ENCODE measurements at regions of chr16 and their contacts with region 1.

Region 1: GRCh38 chr16:1408171-1408837 is 6.2 kb downstream of the UNKL start:
- DNase-seq: peak; percentile 93
- ATAC-seq: peak; percentile 84
- H3K4me3 Mint-ChIP-seq: peak overlapping the region; percentile 72
- H3K27ac Mint-ChIP-seq: no peak overlapping the region
- H3K4me1 Mint-ChIP-seq: no peaks in the 10 kb centered on the region
- H3K27me3 Mint-ChIP-seq: no peaks in the 10 kb centered on the region
- CTCF ChIP-seq: no peak

Region 2: DNA sequence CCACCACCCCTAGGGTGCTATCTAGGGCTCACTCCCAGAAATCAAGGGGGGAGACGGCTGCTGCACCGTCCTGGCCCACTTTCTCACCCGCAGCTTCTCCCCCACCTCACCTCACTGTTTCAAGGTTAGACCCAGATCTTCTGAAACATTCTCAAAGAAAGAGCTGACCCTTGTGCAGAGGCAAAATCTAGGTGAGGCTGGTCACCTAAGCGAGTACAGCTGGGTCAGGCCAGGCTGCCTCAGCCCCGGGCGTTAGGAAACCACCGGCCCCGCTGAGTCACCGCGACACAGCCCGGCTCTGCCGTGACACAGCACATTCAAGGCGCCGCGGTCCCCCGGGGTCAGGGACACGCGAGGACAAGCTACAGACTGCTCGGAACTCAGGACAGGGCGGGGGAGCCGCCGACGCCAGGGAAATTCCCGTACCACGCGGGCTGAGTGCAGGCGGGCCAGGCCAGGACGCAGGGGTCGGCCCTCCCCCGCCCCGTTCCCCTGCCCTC is 29.4 kb before region 1 on chr16:
- CTCF ChIA-PET with region 1: interaction called, 5 read pairs
- POLR2A ChIA-PET with region 1: interaction called, 12 read pairs
- DNase-seq: peak; percentile 41
- ATAC-seq: peak; percentile 14
- H3K4me3 Mint-ChIP-seq: peak overlapping the region; percentile 83
- H3K27ac Mint-ChIP-seq: peak overlapping the region; percentile 70
- H3K4me1 Mint-ChIP-seq: peaks cover 18% of the 10 kb centered on the region
- H3K27me3 Mint-ChIP-seq: no peaks in the 10 kb centered on the region
- CTCF ChIP-seq: no peak

Region 3: GRCh38 chr16:1533443-1533951 is 125.2 kb after region 1 on chr16 and contains the start of gene TMEM204:
- CTCF ChIA-PET with region 1: no interaction called
- POLR2A ChIA-PET with region 1: no interaction called
- DNase-seq: no peak
- ATAC-seq: peak; percentile 55
- H3K4me3 Mint-ChIP-seq: no peak within 1 kb of the TSS
- H3K27ac Mint-ChIP-seq: 0 out of 2 replicates have a peak within 1 kb of the TSS, but pooled peaks have one; percentile 68
- H3K4me1 Mint-ChIP-seq: no peaks in the 10 kb centered on the region
- H3K27me3 Mint-ChIP-seq: no peaks in the 10 kb centered on the region
- CTCF ChIP-seq: no peak
- total RNA-seq, gene TMEM204: 0.18 to 0.35 TPM (median 0.30 TPM) in 3 replicates

Measured in WTC11 (cell line).